ENCODE measurements at regions of chr16 and their contacts with region 1.

Region 1: DNA sequence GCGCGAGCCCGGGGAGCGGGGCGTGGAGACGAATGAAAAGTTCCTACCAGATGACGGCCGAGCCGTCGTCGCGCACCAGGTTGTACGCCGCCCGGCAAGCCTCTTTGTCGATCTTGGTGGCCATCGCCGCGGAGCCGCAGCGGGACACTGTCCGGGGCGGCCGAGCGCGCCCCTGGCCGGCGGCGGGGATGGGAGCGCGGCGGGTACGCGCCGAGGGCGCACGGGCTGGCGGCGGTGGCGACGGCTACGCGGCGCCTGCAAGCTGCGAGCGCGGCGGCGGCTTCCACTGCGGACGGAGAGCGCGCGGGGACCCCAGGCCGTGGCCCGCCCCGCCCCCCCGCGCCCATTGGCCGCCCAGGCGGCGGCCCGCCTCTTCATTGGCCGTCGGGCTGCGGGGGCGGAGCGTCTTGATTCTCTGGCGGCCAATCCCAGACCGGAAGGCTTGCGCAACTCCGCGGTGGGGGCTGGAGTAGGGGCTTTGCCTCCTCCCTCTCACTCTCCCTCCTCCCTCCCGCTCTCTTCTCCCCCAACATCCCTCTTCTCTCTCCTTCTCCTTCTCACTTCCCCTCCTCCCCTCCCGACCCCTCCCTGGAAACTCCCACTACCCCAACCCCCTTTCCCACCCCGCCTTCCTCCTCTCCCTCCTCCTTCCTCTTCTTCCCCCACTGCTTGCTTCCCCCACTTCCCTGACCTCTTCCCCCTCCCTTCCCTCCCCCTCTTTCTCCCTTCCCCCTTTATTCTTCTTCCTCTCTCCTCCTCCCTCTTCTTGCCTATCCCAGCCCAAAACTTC is at the start of gene COTL1:
- DNase-seq: peak; percentile 98
- ATAC-seq: peak; percentile 77
- H3K4me3 Mint-ChIP-seq: peak within 1 kb of the TSS; percentile 98
- H3K27ac Mint-ChIP-seq: peak within 1 kb of the TSS; percentile 87
- H3K4me1 Mint-ChIP-seq: peaks cover 41% of the 10 kb centered on the region
- H3K27me3 Mint-ChIP-seq: no peaks in the 10 kb centered on the region
- total RNA-seq, gene COTL1: 353 to 384 TPM

Region 2: DNA sequence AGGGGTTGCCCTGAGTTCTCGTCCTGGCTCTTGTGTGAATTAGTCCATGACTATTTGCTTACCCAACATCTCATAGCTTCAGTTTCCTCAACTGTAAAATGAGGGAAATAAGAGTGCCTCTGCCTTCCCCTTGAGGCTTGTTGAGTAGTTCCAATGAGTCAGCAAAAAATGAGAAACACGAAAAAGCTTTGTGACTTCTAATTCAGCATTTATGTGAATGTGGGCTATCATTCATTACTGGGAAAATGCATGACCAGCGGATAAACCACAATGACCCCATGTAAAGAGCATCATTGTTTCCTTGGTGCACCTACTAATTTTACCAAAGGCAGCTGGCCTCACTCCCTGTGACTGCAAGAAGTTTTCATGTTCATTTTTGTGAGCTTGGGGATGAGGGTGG is 1184.8 kb before region 1 on chr16:
- CTCF ChIA-PET with region 1: no interaction called
- POLR2A ChIA-PET with region 1: no interaction called
- intact Hi-C with region 1: no loop called
- DNase-seq: no peak
- ATAC-seq: no peak
- H3K4me3 Mint-ChIP-seq: no peak overlapping the region
- H3K27ac Mint-ChIP-seq: no peak overlapping the region
- H3K4me1 Mint-ChIP-seq: no peaks in the 10 kb centered on the region
- H3K27me3 Mint-ChIP-seq: peaks cover 4% of the 10 kb centered on the region

Region 3: DNA sequence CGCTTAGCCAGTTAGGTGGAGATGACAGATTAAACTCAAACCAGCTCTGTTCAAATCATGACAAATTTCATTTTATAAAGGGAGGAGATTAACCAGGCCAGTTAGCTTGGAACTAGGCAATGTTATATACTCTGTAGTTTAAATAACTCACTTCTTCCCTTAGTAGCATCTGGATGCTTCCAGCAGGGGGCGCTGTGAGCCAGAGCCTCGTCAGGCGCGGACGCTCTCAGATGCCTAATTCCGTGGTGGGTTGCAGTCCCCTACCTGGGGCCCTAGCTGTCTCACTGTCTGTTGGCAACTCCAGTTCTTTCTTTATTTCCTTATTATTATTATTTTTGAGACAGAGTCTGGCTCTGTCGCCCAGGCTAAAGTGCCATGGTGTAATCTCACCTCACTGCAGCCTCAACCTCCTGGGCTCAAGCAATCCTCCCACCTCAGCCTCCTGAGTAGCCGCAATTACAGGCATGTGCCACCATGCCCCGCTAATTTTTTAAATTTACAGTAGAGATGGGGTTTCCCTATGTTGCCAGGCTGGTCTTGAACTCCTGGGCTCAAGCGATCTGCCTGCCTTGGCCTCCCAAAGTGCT is 340.7 kb before region 1 on chr16:
- CTCF ChIA-PET with region 1: interaction called, 4 read pairs
- POLR2A ChIA-PET with region 1: no interaction called
- intact Hi-C with region 1: loop called (anchors 5 to 10 kb)
- DNase-seq: peak; percentile 86
- ATAC-seq: peak; percentile 73
- H3K4me3 Mint-ChIP-seq: no peak overlapping the region
- H3K27ac Mint-ChIP-seq: no peak overlapping the region
- H3K4me1 Mint-ChIP-seq: no peaks in the 10 kb centered on the region
- H3K27me3 Mint-ChIP-seq: peaks cover 2% of the 10 kb centered on the region

Region 4: GRCh38 chr16:84599521-84600202 is 18.3 kb before region 1 on chr16:
- CTCF ChIA-PET with region 1: interaction called, 87 read pairs
- POLR2A ChIA-PET with region 1: interaction called, 20 read pairs
- intact Hi-C with region 1: loop called (anchors 1 kb)
- DNase-seq: peak; percentile 90
- ATAC-seq: peak; percentile 58
- H3K4me3 Mint-ChIP-seq: peak overlapping the region; percentile 74
- H3K27ac Mint-ChIP-seq: peak overlapping the region; percentile 97
- H3K4me1 Mint-ChIP-seq: peaks cover 94% of the 10 kb centered on the region
- H3K27me3 Mint-ChIP-seq: no peaks in the 10 kb centered on the region

Region 5: DNA sequence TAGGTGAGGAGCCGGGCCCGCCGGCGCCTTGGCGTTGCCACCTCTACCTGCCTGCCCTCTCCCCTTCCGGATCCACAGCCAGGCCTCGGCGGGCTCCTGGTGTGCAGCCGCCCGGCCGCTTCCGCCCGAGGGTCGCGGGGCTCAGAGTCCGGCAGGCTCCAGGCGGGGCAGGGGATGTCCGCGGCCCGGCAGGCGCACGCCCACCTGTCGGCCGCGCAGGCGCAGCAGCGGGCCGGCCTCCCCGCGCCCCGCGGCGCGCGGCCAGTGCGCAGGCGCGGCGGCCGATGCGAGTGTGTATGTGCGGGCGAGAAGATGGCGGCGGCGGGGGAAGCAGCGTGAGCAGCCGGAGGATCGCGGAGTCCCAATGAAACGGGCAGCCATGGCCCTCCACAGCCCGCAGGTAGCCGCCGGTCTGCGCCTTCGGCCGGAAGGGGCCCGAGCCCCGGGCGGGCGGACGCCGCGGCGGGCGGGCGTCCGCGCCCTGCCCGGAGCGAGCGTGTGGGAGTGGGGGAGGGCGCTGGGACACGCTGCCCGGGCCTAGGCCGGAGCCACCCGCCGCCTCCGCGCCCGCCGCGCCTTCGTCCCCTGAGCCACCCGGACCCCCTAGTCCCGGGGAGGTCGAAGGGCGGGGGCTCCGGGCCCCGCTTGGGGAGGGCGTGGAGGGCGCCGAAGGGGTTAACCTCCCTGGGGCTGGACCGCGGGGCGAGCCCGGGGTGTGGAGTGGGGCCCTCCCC is 81.9 kb after region 1 on chr16 and contains the start of gene USP10:
- CTCF ChIA-PET with region 1: interaction called, 6 read pairs
- POLR2A ChIA-PET with region 1: no interaction called
- intact Hi-C with region 1: loop called in 1 of 2 experiments (anchors 2 kb)
- DNase-seq: peak; percentile 90
- ATAC-seq: peak; percentile 83
- H3K4me3 Mint-ChIP-seq: peak within 1 kb of the TSS; percentile 89
- H3K27ac Mint-ChIP-seq: peak within 1 kb of the TSS; percentile 97
- H3K4me1 Mint-ChIP-seq: peaks cover 38% of the 10 kb centered on the region
- H3K27me3 Mint-ChIP-seq: no peaks in the 10 kb centered on the region
- total RNA-seq, gene USP10: 117 to 133 TPM

Region 6: GRCh38 chr16:84952335-84953189 is 334.6 kb after region 1 on chr16:
- CTCF ChIA-PET with region 1: interaction called, 3 read pairs
- POLR2A ChIA-PET with region 1: no interaction called
- intact Hi-C with region 1: loop called in 1 of 2 experiments (anchors 1 kb)
- DNase-seq: peak; percentile 79
- ATAC-seq: peak; percentile 91
- H3K4me3 Mint-ChIP-seq: no peak overlapping the region
- H3K27ac Mint-ChIP-seq: no peak overlapping the region
- H3K4me1 Mint-ChIP-seq: no peaks in the 10 kb centered on the region
- H3K27me3 Mint-ChIP-seq: no peaks in the 10 kb centered on the region

Measured in activated CD4-positive, alpha-beta T cell treated with anti-CD3 and anti-CD28 coated beads for 36 hours (primary cell).